ENCODE measurements at regions of chr11 and their contacts with region 1.

Region 1: GRCh38 chr11:119057000-119057769 is at the start of gene HYOU1:
- DNase-seq: peak; percentile 98
- ATAC-seq: peak; percentile 93
- H3K4me3 ChIP-seq: peak within 1 kb of the TSS; percentile 93
- H3K27ac ChIP-seq: peak within 1 kb of the TSS; percentile 62
- H3K4me1 ChIP-seq: peaks cover 15% of the 10 kb centered on the region
- H3K27me3 ChIP-seq: no peaks in the 10 kb centered on the region
- CTCF ChIP-seq: peak; percentile 24
- total RNA-seq, gene HYOU1: 168 and 208 TPM in 2 replicates

Region 2: GRCh38 chr11:119030329-119031049 is 26.7 kb before region 1 on chr11 and contains the start of gene SLC37A4:
- CTCF ChIA-PET with region 1: no interaction called
- POLR2A ChIA-PET with region 1: no interaction called
- intact Hi-C with region 1: no loop called
- DNase-seq: peak; percentile 100
- ATAC-seq: peak; percentile 84
- H3K4me3 ChIP-seq: peak within 1 kb of the TSS; percentile 96
- H3K27ac ChIP-seq: peak within 1 kb of the TSS; percentile 15; the same call in 1 of the 2 replicates
- H3K4me1 ChIP-seq: peaks cover 16% of the 10 kb centered on the region
- H3K27me3 ChIP-seq: no peaks in the 10 kb centered on the region
- CTCF ChIP-seq: peak; percentile 93
- total RNA-seq, gene SLC37A4: 31.4 and 35.4 TPM in 2 replicates

Region 3: DNA sequence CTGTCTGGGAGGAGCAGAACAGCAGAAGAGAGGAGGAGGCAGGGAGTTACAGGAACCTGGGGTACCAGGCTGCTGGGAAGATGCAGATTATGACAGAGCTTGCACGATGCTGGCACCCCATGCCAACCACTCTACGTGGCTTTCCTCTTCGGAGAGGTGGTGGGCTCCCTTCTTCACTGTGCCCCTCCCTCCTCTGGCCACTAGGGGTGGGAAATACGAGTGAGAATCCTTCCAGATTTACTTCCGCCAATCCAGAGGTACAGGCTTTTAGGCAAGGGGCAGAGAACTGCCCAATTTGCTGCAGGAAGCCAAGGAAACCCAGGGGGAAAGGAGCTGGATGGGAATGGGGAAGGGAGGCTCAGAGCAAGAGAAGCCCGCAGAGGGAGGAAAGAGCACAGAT is 12.5 kb before region 1 on chr11:
- CTCF ChIA-PET with region 1: interaction called, 10 read pairs
- POLR2A ChIA-PET with region 1: interaction called, 3 read pairs
- intact Hi-C with region 1: no loop called
- DNase-seq: no peak
- ATAC-seq: no peak
- H3K4me3 ChIP-seq: no peak overlapping the region
- H3K27ac ChIP-seq: no peak overlapping the region
- H3K4me1 ChIP-seq: no peaks in the 10 kb centered on the region
- H3K27me3 ChIP-seq: no peaks in the 10 kb centered on the region
- CTCF ChIP-seq: no peak; the same call in 1 of the 2 replicates

Region 4: GRCh38 chr11:119095066-119095880 is 38.1 kb after region 1 on chr11:
- CTCF ChIA-PET with region 1: no interaction called
- POLR2A ChIA-PET with region 1: no interaction called
- intact Hi-C with region 1: loop called (anchors 2 kb)
- DNase-seq: peak; percentile 100
- ATAC-seq: peak; percentile 79
- H3K4me3 ChIP-seq: peak overlapping the region; percentile 90
- H3K27ac ChIP-seq: peak overlapping the region; percentile 53
- H3K4me1 ChIP-seq: peaks cover 28% of the 10 kb centered on the region
- H3K27me3 ChIP-seq: no peaks in the 10 kb centered on the region
- CTCF ChIP-seq: 0 out of 2 replicates have a peak, but pooled peaks have one; percentile 29